Activated naive CD8-positive, alpha-beta T cell treated with anti-CD3 and anti-CD28 coated beads, Interleukin-2, amount 10 ng/mL, durations not matched to agents 7 days and 5 days (primary cell): ENCODE measurements at regions of chr1 and their contacts with region 1.

Region 1: DNA sequence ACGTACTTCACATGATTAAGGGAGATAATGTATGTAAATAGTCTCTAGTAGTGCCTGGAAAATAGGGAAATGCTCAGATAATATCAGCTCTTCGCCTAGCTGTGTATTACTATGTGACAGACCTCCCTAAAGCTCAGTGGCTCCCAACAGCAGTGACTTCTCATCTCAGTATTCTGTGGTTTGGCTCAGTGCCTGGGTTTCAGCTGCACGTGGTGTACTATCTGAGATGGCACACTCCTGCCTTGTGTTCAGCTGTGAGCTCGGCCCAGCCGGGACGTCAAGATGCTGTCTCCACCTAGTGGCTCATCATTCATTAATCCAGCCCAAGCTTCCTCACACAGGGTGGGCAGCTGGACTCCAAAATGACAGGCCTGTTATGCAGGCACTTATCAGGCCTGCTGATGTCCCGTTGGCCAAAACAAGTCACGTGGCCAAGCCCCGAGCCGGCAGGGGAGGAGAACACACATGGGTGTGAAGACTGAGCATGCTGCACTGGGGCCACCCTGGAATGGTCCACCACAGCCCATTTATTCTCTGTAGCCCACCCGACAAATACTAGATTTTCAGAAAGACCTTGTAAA is 17.8 kb downstream of the SLFNL1 start:
- DNase-seq: peak; percentile 65
- ATAC-seq: peak; percentile 99
- H3K4me3 Mint-ChIP-seq: no peak overlapping the region
- H3K27ac Mint-ChIP-seq: peak overlapping the region; percentile 53
- H3K4me1 Mint-ChIP-seq: peaks cover 24% of the 10 kb centered on the region
- H3K27me3 Mint-ChIP-seq: no peaks in the 10 kb centered on the region

Region 2: GRCh38 chr1:40979233-40980067 is 24.3 kb before region 1 on chr1 and contains the start of gene CTPS1:
- POLR2A ChIA-PET with region 1: interaction called, 22 read pairs
- DNase-seq: peak; percentile 98
- ATAC-seq: peak; percentile 92
- H3K4me3 Mint-ChIP-seq: peak within 1 kb of the TSS; percentile 93
- H3K27ac Mint-ChIP-seq: peak within 1 kb of the TSS; percentile 96
- H3K4me1 Mint-ChIP-seq: peaks cover 37% of the 10 kb centered on the region
- H3K27me3 Mint-ChIP-seq: no peaks in the 10 kb centered on the region
- total RNA-seq, gene CTPS1: 45.1 to 47.5 TPM